ENCODE measurements at regions of chr1 and their contacts with region 1.

Region 1: GRCh38 chr1:100443811-100444571 is 91.7 kb downstream of the CDC14A start:
- DNase-seq: peak; percentile 49
- ATAC-seq: peak; percentile 76
- H3K4me3 Mint-ChIP-seq: peak overlapping the region; percentile 72
- H3K27ac Mint-ChIP-seq: peak overlapping the region; percentile 95
- H3K4me1 Mint-ChIP-seq: peaks cover 78% of the 10 kb centered on the region
- H3K27me3 Mint-ChIP-seq: no peaks in the 10 kb centered on the region
- CTCF ChIP-seq: no peak

Region 2: GRCh38 chr1:100132566-100133477 is 311.2 kb before region 1 on chr1 and contains the starts of genes SASS6 and TRMT13:
- CTCF ChIA-PET with region 1: no interaction called
- POLR2A ChIA-PET with region 1: no interaction called
- intact Hi-C with region 1: loop called (anchors 5 kb)
- DNase-seq: peak; percentile 98
- ATAC-seq: peak; percentile 95
- H3K4me3 Mint-ChIP-seq: peak within 1 kb of the TSS; percentile 89
- H3K27ac Mint-ChIP-seq: peak within 1 kb of the TSS; percentile 96
- H3K4me1 Mint-ChIP-seq: peaks cover 37% of the 10 kb centered on the region
- H3K27me3 Mint-ChIP-seq: no peaks in the 10 kb centered on the region
- CTCF ChIP-seq: no peak
- total RNA-seq, gene SASS6: 12.9 to 13.6 TPM
- total RNA-seq, gene TRMT13: 15.5 to 17.5 TPM

Region 3: GRCh38 chr1:100377590-100378361 is 66.2 kb before region 1 on chr1:
- CTCF ChIA-PET with region 1: no interaction called
- POLR2A ChIA-PET with region 1: interaction called, 3 read pairs
- intact Hi-C with region 1: loop called (anchors 5 kb)
- DNase-seq: no peak
- ATAC-seq: peak; percentile 86
- H3K4me3 Mint-ChIP-seq: peak overlapping the region; percentile 44
- H3K27ac Mint-ChIP-seq: peak overlapping the region; percentile 94
- H3K4me1 Mint-ChIP-seq: peaks cover 71% of the 10 kb centered on the region
- H3K27me3 Mint-ChIP-seq: no peaks in the 10 kb centered on the region
- CTCF ChIP-seq: no peak

Region 4: GRCh38 chr1:100400404-100400803 is 43.6 kb before region 1 on chr1:
- CTCF ChIA-PET with region 1: interaction called, 3 read pairs
- POLR2A ChIA-PET with region 1: no interaction called
- intact Hi-C with region 1: loop called (anchors 1 kb)
- DNase-seq: peak; percentile 76
- ATAC-seq: peak; percentile 68
- H3K4me3 Mint-ChIP-seq: peak overlapping the region; percentile 63
- H3K27ac Mint-ChIP-seq: peak overlapping the region; percentile 97
- H3K4me1 Mint-ChIP-seq: peaks cover 78% of the 10 kb centered on the region
- H3K27me3 Mint-ChIP-seq: no peaks in the 10 kb centered on the region
- CTCF ChIP-seq: no peak

Region 5: GRCh38 chr1:100430325-100430813 is 13.6 kb before region 1 on chr1:
- CTCF ChIA-PET with region 1: interaction called, 15 read pairs
- POLR2A ChIA-PET with region 1: interaction called, 7 read pairs
- intact Hi-C with region 1: no loop called
- DNase-seq: no peak
- ATAC-seq: no peak
- H3K4me3 Mint-ChIP-seq: no peak overlapping the region
- H3K27ac Mint-ChIP-seq: no peak overlapping the region
- H3K4me1 Mint-ChIP-seq: peaks cover 58% of the 10 kb centered on the region
- H3K27me3 Mint-ChIP-seq: no peaks in the 10 kb centered on the region
- CTCF ChIP-seq: no peak

Measured in activated CD8-positive, alpha-beta T cell treated with anti-CD3 and anti-CD28 coated beads for 36 hours (primary cell).